Ascending aorta (tissue), 2 donors: ENCODE measurements at regions of chrX and their contacts with region 1.

Region 1: DNA sequence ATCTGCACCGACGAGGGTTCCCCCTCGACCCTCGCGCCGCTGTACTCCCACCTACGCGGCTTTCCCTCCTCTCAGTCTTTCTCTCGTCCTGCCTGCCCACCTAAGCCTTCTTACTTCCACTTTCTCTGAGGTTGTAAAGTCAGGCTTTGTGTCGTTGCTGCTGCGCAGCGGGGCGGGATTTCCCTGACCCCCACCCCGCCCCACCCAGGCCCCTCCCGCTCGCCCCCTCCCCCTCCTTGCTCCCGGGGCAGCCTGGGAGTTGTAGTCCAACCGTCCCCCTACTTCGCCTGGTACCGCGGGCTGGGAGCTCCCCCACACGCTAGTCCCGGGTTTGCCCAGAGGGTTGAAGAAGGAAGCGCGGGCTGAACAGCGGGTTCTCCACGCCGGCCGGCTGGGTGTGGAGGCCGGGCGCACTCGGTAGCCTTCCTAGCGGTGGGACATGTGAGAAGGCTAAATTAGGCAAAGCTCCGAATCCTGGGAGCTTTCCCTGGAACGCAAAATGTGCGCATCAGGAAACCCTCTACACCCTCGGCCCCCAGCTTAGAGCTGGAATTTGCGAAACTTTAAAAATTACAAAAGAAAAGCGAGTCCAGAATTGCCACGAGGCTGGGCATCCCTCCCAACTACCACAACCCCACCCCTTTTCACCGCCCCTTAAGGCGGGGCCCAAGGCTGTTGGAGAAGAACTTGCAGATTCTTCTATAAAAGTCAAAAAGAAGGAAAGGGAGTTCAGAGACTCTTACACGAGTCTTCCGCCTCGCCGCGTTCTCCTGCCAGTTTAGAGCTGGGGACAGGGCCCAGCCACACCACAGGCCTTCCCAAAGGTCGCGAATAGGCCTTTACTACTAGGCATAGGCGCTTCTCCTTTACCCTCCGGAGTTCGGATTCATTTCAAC is at the start of gene ATP11C:
- DNase-seq: peak; percentile 36 to 86
- H3K4me3 ChIP-seq: peak within 1 kb of the TSS; percentile 66 to 82
- H3K27ac ChIP-seq: peak within 1 kb of the TSS; percentile 92 to 96
- H3K4me1 ChIP-seq: no peaks in the 10 kb centered on the region
- H3K27me3 ChIP-seq: no peaks in the 10 kb centered on the region
- CTCF ChIP-seq: peak in 1 of 3 experiments; percentile 12
- total RNA-seq, gene ATP11C: 16.4 TPM

Region 2: GRCh38 chrX:139739138-139739537 is 194.0 kb before region 1 on chrX:
- intact Hi-C with region 1: loop called (anchors 1 kb)
- DNase-seq: no peak
- H3K4me3 ChIP-seq: no peak overlapping the region
- H3K27ac ChIP-seq: no peak overlapping the region
- H3K4me1 ChIP-seq: no peaks in the 10 kb centered on the region
- H3K27me3 ChIP-seq: no peaks in the 10 kb centered on the region
- CTCF ChIP-seq: no peak

Region 3: GRCh38 chrX:139759637-139760036 is 173.5 kb before region 1 on chrX:
- intact Hi-C with region 1: loop called (anchors 5 kb)
- DNase-seq: no peak
- H3K4me3 ChIP-seq: no peak overlapping the region
- H3K27ac ChIP-seq: no peak overlapping the region
- H3K4me1 ChIP-seq: no peaks in the 10 kb centered on the region
- H3K27me3 ChIP-seq: no peaks in the 10 kb centered on the region
- CTCF ChIP-seq: peak in 2 of 3 experiments; percentile 6 to 23

Region 4: DNA sequence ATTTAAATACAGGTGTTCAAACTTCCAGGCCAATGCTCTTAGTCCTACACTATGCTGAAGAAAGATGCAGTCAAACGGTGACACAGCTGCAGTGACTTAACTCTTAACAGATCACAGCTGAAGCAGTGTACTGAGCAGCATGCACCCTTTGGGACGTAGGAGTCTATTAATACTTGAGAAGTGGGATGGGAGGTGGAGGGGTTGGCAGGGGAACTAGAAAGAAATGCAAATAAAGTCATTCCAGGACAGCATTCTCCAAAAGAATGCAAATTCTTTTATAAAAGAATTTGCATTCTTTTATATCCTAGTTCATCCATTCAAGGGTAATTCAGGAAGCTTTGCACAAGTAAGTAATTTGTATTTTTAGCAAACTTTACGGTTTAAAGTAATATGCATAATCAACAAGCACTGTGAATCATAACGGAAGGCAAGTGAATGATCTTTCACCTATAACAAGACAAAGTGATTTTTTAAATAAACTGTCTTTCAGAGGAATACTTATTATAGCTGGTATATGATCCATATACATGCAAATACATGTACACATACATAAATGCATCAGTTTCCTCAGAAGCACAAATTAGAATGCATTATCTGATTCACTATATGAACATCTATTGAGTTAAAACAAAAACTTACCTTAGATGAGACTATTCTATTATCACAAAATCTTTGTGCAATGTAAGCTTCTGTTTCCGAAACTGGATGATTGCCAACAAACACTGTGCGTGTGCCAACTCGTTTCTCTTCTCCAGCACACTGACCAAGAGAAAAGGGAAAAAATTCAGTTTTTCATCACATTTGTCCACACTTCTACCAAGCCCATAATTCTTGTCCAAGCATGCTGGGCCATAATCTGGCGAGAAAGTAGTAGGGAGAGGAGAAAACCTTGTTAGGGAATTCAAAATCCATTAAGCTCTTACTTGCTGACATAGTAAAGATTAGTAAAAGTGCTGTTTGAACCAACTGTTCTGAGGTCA is 106.8 kb before region 1 on chrX:
- intact Hi-C with region 1: loop called (anchors 5 kb)
- DNase-seq: no peak
- H3K4me3 ChIP-seq: no peak overlapping the region
- H3K27ac ChIP-seq: no peak overlapping the region
- H3K4me1 ChIP-seq: peaks cover 3 to 8% of the 10 kb centered on the region in 2 donors
- H3K27me3 ChIP-seq: no peaks in the 10 kb centered on the region
- CTCF ChIP-seq: no peak

Region 5: GRCh38 chrX:139881572-139881971 is 51.6 kb before region 1 on chrX:
- intact Hi-C with region 1: loop called (anchors 2 kb)
- DNase-seq: no peak
- H3K4me3 ChIP-seq: no peak overlapping the region
- H3K27ac ChIP-seq: peak overlapping the region; percentile 48 to 49
- H3K4me1 ChIP-seq: no peaks in the 10 kb centered on the region
- H3K27me3 ChIP-seq: no peaks in the 10 kb centered on the region
- CTCF ChIP-seq: no peak